Activated CD4-positive, alpha-beta memory T cell treated with anti-CD3 and anti-CD28 coated beads for 36 hours (primary cell): ENCODE measurements at regions of chrX and their contacts with region 1.

Region 1: GRCh38 chrX:133698298-133698697 is 283.0 kb upstream of the GPC4 start:
- DNase-seq: no peak
- H3K4me3 Mint-ChIP-seq: no peak overlapping the region
- H3K27ac Mint-ChIP-seq: no peak overlapping the region
- H3K4me1 Mint-ChIP-seq: no peaks in the 10 kb centered on the region
- H3K27me3 Mint-ChIP-seq: no peaks in the 10 kb centered on the region

Region 2: GRCh38 chrX:133776072-133776471 is 77.8 kb after region 1 on chrX:
- CTCF ChIA-PET with region 1: interaction called, 3 read pairs
- POLR2A ChIA-PET with region 1: no interaction called
- intact Hi-C with region 1: loop called (anchors 10 kb)
- DNase-seq: peak; percentile 42
- H3K4me3 Mint-ChIP-seq: no peak overlapping the region
- H3K27ac Mint-ChIP-seq: no peak overlapping the region
- H3K4me1 Mint-ChIP-seq: no peaks in the 10 kb centered on the region
- H3K27me3 Mint-ChIP-seq: no peaks in the 10 kb centered on the region